ENCODE measurements at regions of chrX and their contacts with region 1.

Region 1: DNA sequence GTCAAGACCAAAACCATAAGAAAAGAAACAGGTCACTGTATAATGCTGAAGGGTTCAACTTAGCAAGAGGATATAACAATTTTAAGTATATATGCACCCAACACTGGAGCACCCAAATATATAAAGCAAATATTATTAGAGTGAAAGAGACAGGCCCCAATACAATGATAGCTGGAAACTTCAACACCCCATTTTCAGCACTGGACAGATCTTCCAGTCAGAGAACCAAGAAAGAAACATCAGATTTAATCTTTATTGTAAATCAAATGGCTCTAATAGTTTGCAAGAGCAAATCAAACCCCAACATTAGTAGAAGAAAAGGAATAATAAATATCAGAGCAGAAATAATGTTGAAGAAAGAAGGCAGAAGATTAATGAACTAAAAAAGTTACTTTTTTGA is 36.2 kb downstream of the MAGED4 start:
- DNase-seq: no peak
- CTCF ChIP-seq: no peak

Region 2: GRCh38 chrX:51641421-51642021 is 579.4 kb before region 1 on chrX:
- in situ Hi-C with region 1: loop called (anchors 25 kb)
- DNase-seq: peak; percentile 44
- CTCF ChIP-seq: peak; percentile 32

Region 3: GRCh38 chrX:51975811-51976210 is 245.1 kb before region 1 on chrX:
- in situ Hi-C with region 1: no loop called
- DNase-seq: no peak
- CTCF ChIP-seq: no peak